Naive thymus-derived CD4-positive, alpha-beta T cell (primary cell): ENCODE measurements at regions of chr6 and their contacts with region 1.

Region 1: DNA sequence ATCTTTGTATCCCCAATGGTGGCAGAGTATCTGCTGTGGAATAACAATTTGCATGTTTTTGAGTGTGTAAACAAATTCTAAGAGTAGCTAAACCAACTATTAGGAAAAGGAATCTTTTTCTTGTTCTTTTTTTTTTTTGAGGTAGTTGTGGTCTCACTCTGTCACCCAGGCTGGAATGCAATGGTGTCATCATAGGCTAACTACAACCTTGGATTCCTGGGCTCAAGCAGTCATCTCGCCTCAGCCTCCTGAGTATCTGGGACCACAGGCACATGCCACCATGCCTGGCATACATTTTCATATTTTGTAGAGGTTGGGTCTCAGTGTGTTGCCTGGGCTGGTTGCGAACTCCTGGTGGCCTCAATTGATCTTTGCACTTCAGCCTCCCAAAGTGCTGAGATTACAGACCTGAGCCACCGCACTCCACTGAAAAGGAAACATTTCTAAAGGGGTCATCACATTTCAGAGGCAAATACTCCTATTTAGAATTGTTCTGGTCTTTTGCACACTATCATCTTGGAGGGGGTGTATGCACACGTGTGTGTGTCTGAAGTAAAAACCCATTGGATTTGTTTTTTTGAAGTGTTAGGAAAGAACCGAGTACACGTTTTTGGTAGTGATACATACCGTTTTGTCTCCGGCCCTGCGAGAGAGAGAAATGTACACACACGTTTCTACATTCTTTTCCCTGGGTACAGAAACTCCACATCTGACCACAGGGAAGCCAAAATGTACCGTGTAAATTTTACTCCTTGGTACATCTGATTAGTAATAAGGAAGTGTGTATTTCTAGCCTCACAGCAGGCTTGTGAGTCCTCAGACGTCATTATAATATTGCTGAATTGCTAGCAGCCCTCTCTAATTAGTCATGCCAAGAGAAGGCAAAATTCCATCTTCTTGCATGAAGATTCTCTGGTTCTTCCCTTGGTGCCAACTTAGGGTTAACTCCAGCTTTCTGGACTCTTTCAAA is 183.6 kb downstream of the JARID2 start:
- DNase-seq: no peak
- ATAC-seq: peak; percentile 64
- H3K4me3 ChIP-seq: no peak overlapping the region
- H3K4me3 Mint-ChIP-seq: no peak overlapping the region
- H3K27ac ChIP-seq: no peak overlapping the region
- H3K27ac Mint-ChIP-seq: peak overlapping the region in 2 of 9 donors; percentile 31 to 43
- H3K4me1 ChIP-seq: peaks cover 24 to 46% of the 10 kb centered on the region in 2 donors
- H3K4me1 Mint-ChIP-seq: peaks cover 56 to 96% (median 91%) of the 10 kb centered on the region in 7 donors
- H3K27me3 ChIP-seq: no peaks in the 10 kb centered on the region
- H3K27me3 Mint-ChIP-seq: no peaks in the 10 kb centered on the region

Region 2: GRCh38 chr6:15340775-15341174 is 88.7 kb before region 1 on chr6:
- CTCF ChIA-PET with region 1: interaction called, 3 read pairs
- POLR2A ChIA-PET with region 1: no interaction called
- intact Hi-C with region 1: loop called in 1 of 2 experiments (anchors 5 kb)
- DNase-seq: peak in 3 of 9 donors; percentile 24 to 35 (median 31)
- ATAC-seq: peak; percentile 40
- H3K4me3 ChIP-seq: no peak overlapping the region
- H3K4me3 Mint-ChIP-seq: peak overlapping the region; percentile 57 to 83 (median 74)
- H3K27ac ChIP-seq: peak overlapping the region; percentile 61
- H3K27ac Mint-ChIP-seq: peak overlapping the region; percentile 77 to 93 (median 89)
- H3K4me1 ChIP-seq: peaks cover 22 to 50% of the 10 kb centered on the region in 2 donors
- H3K4me1 Mint-ChIP-seq: peaks cover 57 to 99% (median 84%) of the 10 kb centered on the region in 7 donors
- H3K27me3 ChIP-seq: no peaks in the 10 kb centered on the region
- H3K27me3 Mint-ChIP-seq: no peaks in the 10 kb centered on the region

Region 3: GRCh38 chr6:15491255-15491985 is 62.0 kb after region 1 on chr6:
- CTCF ChIA-PET with region 1: no interaction called
- POLR2A ChIA-PET with region 1: no interaction called
- intact Hi-C with region 1: no loop called
- DNase-seq: peak; percentile 48 to 77 (median 70)
- ATAC-seq: peak; percentile 88
- H3K4me3 ChIP-seq: no peak overlapping the region
- H3K4me3 Mint-ChIP-seq: peak overlapping the region in 6 of 10 donors; percentile 2 to 17 (median 3)
- H3K27ac ChIP-seq: peak overlapping the region; percentile 2
- H3K27ac Mint-ChIP-seq: peak overlapping the region; percentile 29 to 88 (median 67)
- H3K4me1 ChIP-seq: peaks cover 0 to 11% of the 10 kb centered on the region in 2 donors
- H3K4me1 Mint-ChIP-seq: peaks cover 24 to 58% (median 41%) of the 10 kb centered on the region in 7 donors
- H3K27me3 ChIP-seq: no peaks in the 10 kb centered on the region
- H3K27me3 Mint-ChIP-seq: no peaks in the 10 kb centered on the region